ENCODE measurements at regions of chr1 and their contacts with region 1.

Region 1: GRCh38 chr1:157090196-157090647 is 9.4 kb downstream of the ETV3L start:
- DNase-seq: peak; percentile 70 to 96 (median 90)

Region 2: GRCh38 chr1:157156058-157156541 is 65.9 kb after region 1 on chr1:
- intact Hi-C with region 1: loop called (anchors 2 kb)
- DNase-seq: peak; percentile 36 to 91 (median 76)

Measured in head of caudate nucleus (tissue), 42 donors.